ENCODE measurements at regions of chr15 and their contacts with region 1.

Region 1: DNA sequence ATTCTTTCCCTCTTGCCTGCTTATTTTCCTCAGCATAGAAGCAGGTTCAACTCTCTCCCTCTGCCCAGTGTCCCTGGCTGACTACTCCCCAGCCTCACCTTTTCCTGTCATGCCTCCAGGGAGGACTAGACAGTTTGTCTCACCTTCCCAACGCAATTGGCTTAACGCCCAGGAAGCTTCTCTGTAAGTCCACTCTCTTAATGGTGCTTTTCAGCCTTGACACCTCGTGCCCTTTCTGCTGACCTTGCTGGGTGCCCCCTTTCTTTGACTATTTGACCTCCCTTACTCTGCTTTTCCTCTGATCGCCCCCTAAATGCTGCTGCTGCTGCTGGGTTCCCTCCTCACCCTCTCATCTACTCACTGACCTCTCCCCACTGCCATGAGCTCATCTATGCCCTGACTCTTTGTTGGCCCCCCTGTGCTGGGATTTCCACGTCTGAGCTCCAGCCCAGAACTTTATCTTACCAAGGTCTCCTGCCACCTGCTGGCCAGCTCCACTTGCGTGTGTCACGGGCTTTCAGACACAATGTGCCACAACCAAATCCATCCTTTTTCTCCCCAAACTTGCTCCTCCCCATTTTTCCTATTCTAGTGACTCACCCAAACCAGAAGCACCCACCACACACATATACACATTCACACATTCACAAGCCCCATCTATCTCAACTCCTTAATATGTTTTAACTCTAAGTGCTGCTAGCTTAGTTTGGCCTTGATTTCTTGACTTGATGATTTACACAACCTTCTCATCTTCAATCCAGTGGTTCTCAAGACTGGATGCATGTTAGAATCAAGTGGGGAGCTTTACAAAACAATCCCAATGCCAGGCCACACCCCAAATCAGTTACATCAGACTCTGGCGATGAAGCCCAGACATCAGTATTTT is 16.6 kb downstream of the EPB42 start:
- DNase-seq: peak; percentile 73
- H3K4me3 ChIP-seq: no peak overlapping the region
- H3K27ac ChIP-seq: no peak overlapping the region
- H3K4me1 ChIP-seq: no peaks in the 10 kb centered on the region
- H3K27me3 ChIP-seq: no peaks in the 10 kb centered on the region
- CTCF ChIP-seq: peak; percentile 78

Region 2: DNA sequence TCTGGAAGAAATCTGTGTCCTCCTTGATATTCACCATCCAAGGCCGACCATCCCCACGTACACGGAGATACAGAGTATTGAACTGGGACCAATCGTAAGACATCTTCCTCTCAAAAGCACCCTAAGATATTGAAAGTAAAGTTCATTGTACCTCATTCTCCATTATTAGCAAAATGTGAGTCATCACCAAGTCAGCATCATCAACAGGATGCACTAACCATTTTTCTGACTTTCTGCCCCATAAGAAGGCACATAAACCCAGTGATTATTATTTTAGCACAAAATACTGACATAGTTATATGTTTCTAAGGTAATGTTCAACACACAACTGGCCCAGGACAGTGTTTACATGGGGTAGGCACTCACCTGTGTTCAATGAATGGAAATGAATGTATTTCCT is 1809.3 kb before region 1 on chr15:
- CTCF ChIA-PET with region 1: no interaction called
- POLR2A ChIA-PET with region 1: no interaction called
- intact Hi-C with region 1: no loop called
- DNase-seq: no peak
- H3K4me3 ChIP-seq: no peak overlapping the region
- H3K27ac ChIP-seq: no peak overlapping the region
- H3K4me1 ChIP-seq: no peaks in the 10 kb centered on the region
- H3K27me3 ChIP-seq: no peaks in the 10 kb centered on the region
- CTCF ChIP-seq: no peak

Region 3: GRCh38 chr15:42939841-42940240 is 264.4 kb before region 1 on chr15:
- CTCF ChIA-PET with region 1: no interaction called
- POLR2A ChIA-PET with region 1: interaction called, 14 read pairs
- intact Hi-C with region 1: no loop called
- DNase-seq: no peak
- H3K4me3 ChIP-seq: no peak overlapping the region
- H3K27ac ChIP-seq: no peak overlapping the region
- H3K4me1 ChIP-seq: no peaks in the 10 kb centered on the region
- H3K27me3 ChIP-seq: no peaks in the 10 kb centered on the region
- CTCF ChIP-seq: no peak

Region 4: GRCh38 chr15:43225201-43225949 is 21.1 kb after region 1 on chr15:
- CTCF ChIA-PET with region 1: interaction called, 12 read pairs
- POLR2A ChIA-PET with region 1: no interaction called
- intact Hi-C with region 1: no loop called
- DNase-seq: peak; percentile 78
- H3K4me3 ChIP-seq: no peak overlapping the region
- H3K27ac ChIP-seq: no peak overlapping the region
- H3K4me1 ChIP-seq: no peaks in the 10 kb centered on the region
- H3K27me3 ChIP-seq: no peaks in the 10 kb centered on the region
- CTCF ChIP-seq: peak; percentile 86